Activated CD4-positive, alpha-beta memory T cell treated with anti-CD3 and anti-CD28 coated beads for 36 hours (primary cell): ENCODE measurements at regions of chr4 and their contacts with region 1.

Region 1: GRCh38 chr4:36325499-36325898 is 44.1 kb downstream of the DTHD1 start:
- DNase-seq: no peak
- H3K4me3 Mint-ChIP-seq: no peak overlapping the region
- H3K27ac Mint-ChIP-seq: peak overlapping the region; percentile 80
- H3K4me1 Mint-ChIP-seq: peaks cover 60% of the 10 kb centered on the region
- H3K27me3 Mint-ChIP-seq: no peaks in the 10 kb centered on the region

Region 2: DNA sequence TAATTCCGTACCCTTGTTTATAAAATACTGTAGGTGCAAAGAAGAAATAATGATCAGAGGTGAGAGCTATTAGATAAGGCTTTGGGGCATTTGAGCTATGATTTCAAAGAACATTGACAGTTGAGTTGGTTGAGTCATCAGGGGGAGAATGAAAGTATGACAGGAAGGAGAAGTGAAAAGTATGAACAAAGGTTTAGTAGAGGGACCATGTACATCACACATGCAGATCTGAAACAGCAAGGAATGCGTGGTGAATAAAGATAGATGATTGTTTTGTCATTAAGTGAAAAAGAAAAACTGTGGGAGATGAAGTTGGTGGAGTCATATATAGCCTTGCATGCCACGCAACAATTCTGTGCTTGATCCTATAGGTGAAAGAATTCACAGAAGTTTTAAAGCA is 244.3 kb before region 1 on chr4:
- CTCF ChIA-PET with region 1: no interaction called
- POLR2A ChIA-PET with region 1: no interaction called
- intact Hi-C with region 1: loop called (anchors 1 kb)
- DNase-seq: peak; percentile 37
- H3K4me3 Mint-ChIP-seq: no peak overlapping the region
- H3K27ac Mint-ChIP-seq: no peak overlapping the region
- H3K4me1 Mint-ChIP-seq: peaks cover 7% of the 10 kb centered on the region
- H3K27me3 Mint-ChIP-seq: no peaks in the 10 kb centered on the region

Region 3: GRCh38 chr4:36255577-36255976 is 69.9 kb before region 1 on chr4:
- CTCF ChIA-PET with region 1: interaction called, 3 read pairs
- POLR2A ChIA-PET with region 1: interaction called, 4 read pairs
- intact Hi-C with region 1: loop called (anchors 1 kb)
- DNase-seq: peak; percentile 75
- H3K4me3 Mint-ChIP-seq: peak overlapping the region; percentile 65
- H3K27ac Mint-ChIP-seq: peak overlapping the region; percentile 95
- H3K4me1 Mint-ChIP-seq: peaks cover 44% of the 10 kb centered on the region
- H3K27me3 Mint-ChIP-seq: no peaks in the 10 kb centered on the region

Region 4: DNA sequence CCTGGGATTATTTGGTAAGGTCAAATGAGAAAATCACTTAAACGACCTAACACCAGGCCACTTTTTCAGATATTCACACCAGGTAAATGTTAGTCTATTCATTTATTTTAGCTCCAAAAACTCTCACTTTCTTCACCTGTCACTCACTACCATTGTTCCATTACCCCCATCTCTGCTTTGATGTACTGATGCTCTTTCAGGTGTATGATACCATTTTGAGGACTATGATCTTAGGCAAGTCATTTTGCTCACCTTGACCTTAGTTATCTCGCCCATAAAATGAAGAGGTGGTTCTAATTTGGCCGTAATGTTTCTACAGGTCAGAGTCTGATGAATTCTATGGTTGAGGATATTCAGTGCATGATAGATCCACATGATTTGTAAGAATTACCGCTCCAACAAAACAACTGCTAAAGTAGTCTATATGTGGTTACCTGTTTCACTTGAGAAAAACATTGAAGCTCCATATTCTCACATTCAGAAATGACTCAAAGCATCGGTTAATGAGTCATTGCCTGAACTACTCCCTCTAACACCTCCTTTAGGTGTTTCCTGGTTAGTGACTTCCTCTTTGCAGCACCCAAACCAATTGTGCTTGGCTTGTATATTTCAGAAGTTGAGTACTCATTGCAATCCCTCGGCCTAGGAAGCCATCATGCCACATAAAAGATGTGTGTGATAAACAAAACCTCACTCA is 39.6 kb before region 1 on chr4:
- CTCF ChIA-PET with region 1: interaction called, 7 read pairs
- POLR2A ChIA-PET with region 1: interaction called, 11 read pairs
- intact Hi-C with region 1: loop called (anchors 1 kb)
- DNase-seq: peak; percentile 75
- H3K4me3 Mint-ChIP-seq: peak overlapping the region; percentile 53
- H3K27ac Mint-ChIP-seq: peak overlapping the region; percentile 87
- H3K4me1 Mint-ChIP-seq: peaks cover 60% of the 10 kb centered on the region
- H3K27me3 Mint-ChIP-seq: no peaks in the 10 kb centered on the region

Region 5: GRCh38 chr4:36363024-36363423 is 37.5 kb after region 1 on chr4:
- CTCF ChIA-PET with region 1: no interaction called
- POLR2A ChIA-PET with region 1: no interaction called
- intact Hi-C with region 1: no loop called
- DNase-seq: no peak
- H3K4me3 Mint-ChIP-seq: no peak overlapping the region
- H3K27ac Mint-ChIP-seq: no peak overlapping the region
- H3K4me1 Mint-ChIP-seq: peaks cover 7% of the 10 kb centered on the region
- H3K27me3 Mint-ChIP-seq: no peaks in the 10 kb centered on the region

Region 6: GRCh38 chr4:36394352-36394903 is 68.9 kb after region 1 on chr4:
- CTCF ChIA-PET with region 1: interaction called, 16 read pairs
- POLR2A ChIA-PET with region 1: no interaction called
- intact Hi-C with region 1: loop called (anchors 1 kb)
- DNase-seq: peak; percentile 60
- H3K4me3 Mint-ChIP-seq: peak overlapping the region; percentile 48
- H3K27ac Mint-ChIP-seq: peak overlapping the region; percentile 94
- H3K4me1 Mint-ChIP-seq: peaks cover 23% of the 10 kb centered on the region
- H3K27me3 Mint-ChIP-seq: peaks cover 2% of the 10 kb centered on the region

Region 7: GRCh38 chr4:36551697-36552214 is 226.3 kb after region 1 on chr4:
- CTCF ChIA-PET with region 1: no interaction called
- POLR2A ChIA-PET with region 1: no interaction called
- intact Hi-C with region 1: loop called (anchors 1 kb)
- DNase-seq: peak; percentile 60
- H3K4me3 Mint-ChIP-seq: no peak overlapping the region
- H3K27ac Mint-ChIP-seq: peak overlapping the region; percentile 53
- H3K4me1 Mint-ChIP-seq: peaks cover 7% of the 10 kb centered on the region
- H3K27me3 Mint-ChIP-seq: peaks cover 2% of the 10 kb centered on the region

Region 8: DNA sequence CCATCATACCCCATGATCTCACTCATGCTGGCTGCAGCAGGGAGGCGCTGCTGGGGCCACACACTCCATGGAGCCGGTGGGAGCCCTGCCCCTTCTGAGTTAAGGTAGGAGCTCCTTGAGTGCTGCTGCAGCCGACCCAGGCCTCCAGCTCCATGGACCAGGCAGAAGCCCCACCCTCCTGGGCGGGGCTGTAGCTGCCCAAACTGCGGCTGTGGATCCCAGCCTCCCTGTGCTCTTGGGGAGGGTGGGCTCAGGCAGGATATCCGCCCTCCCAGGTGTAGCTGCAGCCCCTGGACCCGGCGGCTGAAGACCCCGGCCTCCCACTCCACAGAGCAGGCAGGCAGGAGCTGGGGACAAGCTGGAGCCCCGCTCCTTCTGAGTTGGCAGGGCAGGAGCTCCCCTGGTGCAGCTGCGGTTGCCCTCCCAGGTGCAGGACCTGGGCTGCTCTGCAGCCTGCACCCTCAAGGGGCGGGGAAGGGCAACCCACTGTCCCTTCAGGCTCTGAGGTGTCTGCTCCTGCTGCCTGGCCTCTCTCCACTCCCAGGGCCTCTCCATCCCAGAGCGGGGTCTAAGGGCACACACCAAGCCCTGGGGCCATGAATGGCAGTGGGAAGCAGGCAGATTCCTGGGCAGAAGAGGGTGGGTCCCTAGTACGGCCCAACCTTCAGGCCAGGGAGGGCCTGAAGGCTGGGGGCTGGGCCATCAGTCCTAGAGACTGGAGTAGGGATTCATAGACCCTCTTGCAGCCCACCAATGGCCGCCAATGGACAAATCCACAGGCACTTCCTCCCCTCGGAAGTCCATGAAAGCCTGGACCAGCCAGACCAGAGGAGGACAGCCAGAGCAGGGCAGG is 422.0 kb after region 1 on chr4:
- CTCF ChIA-PET with region 1: no interaction called
- POLR2A ChIA-PET with region 1: no interaction called
- intact Hi-C with region 1: no loop called
- DNase-seq: no peak
- H3K4me3 Mint-ChIP-seq: no peak overlapping the region
- H3K27ac Mint-ChIP-seq: no peak overlapping the region
- H3K4me1 Mint-ChIP-seq: no peaks in the 10 kb centered on the region
- H3K27me3 Mint-ChIP-seq: no peaks in the 10 kb centered on the region

Region 9: GRCh38 chr4:36823199-36823967 is 497.9 kb after region 1 on chr4:
- CTCF ChIA-PET with region 1: no interaction called
- POLR2A ChIA-PET with region 1: no interaction called
- intact Hi-C with region 1: no loop called
- DNase-seq: no peak
- H3K4me3 Mint-ChIP-seq: no peak overlapping the region
- H3K27ac Mint-ChIP-seq: no peak overlapping the region
- H3K4me1 Mint-ChIP-seq: no peaks in the 10 kb centered on the region
- H3K27me3 Mint-ChIP-seq: no peaks in the 10 kb centered on the region